GM12878 (cell line): ENCODE measurements at regions of chr1 and their contacts with region 1.

Region 1: GRCh38 chr1:236113324-236114032 is 28.9 kb upstream of the GPR137B start:
- DNase-seq: no peak
- ATAC-seq: peak; percentile 47
- H3K4me3 ChIP-seq: no peak overlapping the region
- H3K27ac ChIP-seq: no peak overlapping the region
- H3K4me1 ChIP-seq: no peaks in the 10 kb centered on the region
- H3K27me3 ChIP-seq: no peaks in the 10 kb centered on the region
- CTCF ChIP-seq: no peak
- EP300 ChIP-seq: no peak
- POLR2A ChIP-seq: no peak
- RAD21 ChIP-seq: no peak

Region 2: DNA sequence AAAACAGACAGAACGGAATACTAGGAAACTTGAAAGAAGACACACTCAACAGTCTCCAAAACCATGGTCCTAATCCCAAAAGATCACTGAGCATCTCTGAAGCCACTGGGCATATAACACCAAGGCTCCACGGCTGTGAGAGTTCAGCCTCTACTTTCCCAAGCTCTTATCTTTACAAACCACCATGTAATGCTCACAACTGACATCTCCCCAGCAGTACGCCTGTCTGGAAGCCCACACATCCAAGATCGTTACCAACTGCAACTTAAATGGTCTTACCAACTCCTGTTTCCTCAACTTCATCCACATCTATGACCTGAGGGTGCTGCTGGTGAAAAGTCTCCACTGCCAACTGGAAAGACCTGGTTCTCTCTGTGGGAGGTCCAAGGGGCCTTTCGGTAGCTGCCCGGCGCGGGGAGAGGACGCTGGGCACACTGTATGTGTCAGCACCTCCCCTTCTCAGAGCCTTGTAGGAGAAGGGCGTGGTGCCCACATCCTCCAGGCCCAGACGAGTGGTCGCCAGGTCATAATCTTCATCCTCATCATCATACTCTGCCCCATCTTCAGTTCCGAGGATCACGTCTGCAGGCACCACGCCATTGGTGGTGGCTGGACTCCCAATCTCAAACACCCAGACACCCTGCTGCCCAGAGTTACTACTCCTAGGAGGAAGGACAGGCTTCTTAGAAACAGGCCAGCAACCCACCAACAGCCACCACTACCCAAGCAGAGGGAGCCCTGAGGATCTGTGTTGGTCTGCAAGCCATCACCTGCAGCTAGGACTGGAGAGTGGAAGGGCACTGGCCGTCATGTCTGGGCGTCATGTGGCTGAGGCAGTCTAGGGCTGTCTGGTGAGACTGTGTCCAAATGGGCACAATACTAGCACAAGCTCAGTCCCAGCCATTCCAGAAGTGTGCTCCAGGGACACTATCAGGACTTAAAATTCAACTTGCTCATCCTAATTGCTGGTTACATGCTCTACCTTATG is 71.6 kb before region 1 on chr1:
- CTCF ChIA-PET with region 1: no interaction called
- POLR2A ChIA-PET with region 1: no interaction called
- RAD21 ChIA-PET with region 1: no interaction called
- SMC1A ChIA-PET with region 1: no interaction called
- in situ Hi-C with region 1: no loop called
- intact Hi-C with region 1: no loop called
- DNase-seq: no peak
- ATAC-seq: no peak
- H3K4me3 ChIP-seq: no peak overlapping the region
- H3K27ac ChIP-seq: no peak overlapping the region
- H3K4me1 ChIP-seq: no peaks in the 10 kb centered on the region
- H3K27me3 ChIP-seq: no peaks in the 10 kb centered on the region
- CTCF ChIP-seq: no peak
- EP300 ChIP-seq: no peak
- POLR2A ChIP-seq: no peak
- RAD21 ChIP-seq: no peak

Region 3: DNA sequence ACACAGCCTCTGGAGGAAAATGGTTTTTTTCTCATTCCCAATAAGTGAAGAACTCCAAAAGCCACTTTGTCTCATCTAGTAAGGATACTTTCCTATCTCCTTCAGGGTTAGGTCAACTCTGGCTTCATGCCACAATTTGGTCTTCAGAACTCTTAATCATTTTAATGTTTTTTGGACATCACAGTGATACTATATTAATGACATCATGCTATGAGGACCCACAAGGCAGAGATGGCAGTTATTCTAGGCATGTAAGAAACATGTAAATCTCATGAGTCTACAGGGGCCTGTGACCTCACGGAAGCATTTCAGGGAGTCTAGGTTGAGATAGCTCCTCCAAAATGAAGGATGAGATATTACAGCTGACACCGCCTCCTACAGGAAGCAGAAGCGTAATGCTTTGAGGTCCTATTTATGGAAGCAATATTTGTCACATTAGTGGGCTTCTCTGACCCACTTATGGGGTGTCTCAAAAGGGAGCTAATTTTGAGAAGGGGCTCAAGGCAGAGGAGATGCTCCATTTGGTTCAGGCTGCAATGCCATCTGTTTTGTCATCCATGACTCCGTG is 23.9 kb after region 1 on chr1:
- CTCF ChIA-PET with region 1: interaction called, 11 read pairs
- POLR2A ChIA-PET with region 1: no interaction called
- RAD21 ChIA-PET with region 1: interaction called, 6 read pairs
- SMC1A ChIA-PET with region 1: interaction called, 9 read pairs
- in situ Hi-C with region 1: no loop called
- intact Hi-C with region 1: no loop called
- DNase-seq: no peak
- ATAC-seq: peak; percentile 10; the same call in 2 of the 3 replicates
- H3K4me3 ChIP-seq: no peak overlapping the region
- H3K27ac ChIP-seq: no peak overlapping the region
- H3K4me1 ChIP-seq: peaks cover 11% of the 10 kb centered on the region
- H3K27me3 ChIP-seq: peaks cover 1 to 13% of the 10 kb centered on the region in 2 experiments
- CTCF ChIP-seq: peak; percentile 25 to 47 (median 29); a peak in 3 of 6 replicates
- EP300 ChIP-seq: no peak
- POLR2A ChIP-seq: no peak
- RAD21 ChIP-seq: peak; percentile 62

Region 4: GRCh38 chr1:236253918-236254637 is 140.6 kb after region 1 on chr1:
- CTCF ChIA-PET with region 1: no interaction called
- POLR2A ChIA-PET with region 1: no interaction called
- RAD21 ChIA-PET with region 1: no interaction called
- SMC1A ChIA-PET with region 1: no interaction called
- in situ Hi-C with region 1: no loop called
- intact Hi-C with region 1: no loop called
- DNase-seq: no peak
- ATAC-seq: peak; percentile 35
- H3K4me3 ChIP-seq: no peak overlapping the region
- H3K27ac ChIP-seq: no peak overlapping the region
- H3K4me1 ChIP-seq: no peaks in the 10 kb centered on the region
- H3K27me3 ChIP-seq: no peaks in the 10 kb centered on the region
- CTCF ChIP-seq: no peak
- EP300 ChIP-seq: no peak
- POLR2A ChIP-seq: no peak
- RAD21 ChIP-seq: no peak